ENCODE measurements at regions of chr5 and their contacts with region 1.

Region 1: GRCh38 chr5:96687812-96688453 is 25.8 kb downstream of the CAST start:
- DNase-seq: no peak
- H3K4me3 ChIP-seq: no peak overlapping the region
- CTCF ChIP-seq: peak; percentile 45

Region 2: GRCh38 chr5:96662725-96663513 is 25.0 kb before region 1 on chr5:
- CTCF ChIA-PET with region 1: interaction called, 14 read pairs
- POLR2A ChIA-PET with region 1: interaction called, 4 read pairs
- DNase-seq: peak; percentile 29
- H3K4me3 ChIP-seq: peak overlapping the region; percentile 83
- CTCF ChIP-seq: no peak

Region 3: DNA sequence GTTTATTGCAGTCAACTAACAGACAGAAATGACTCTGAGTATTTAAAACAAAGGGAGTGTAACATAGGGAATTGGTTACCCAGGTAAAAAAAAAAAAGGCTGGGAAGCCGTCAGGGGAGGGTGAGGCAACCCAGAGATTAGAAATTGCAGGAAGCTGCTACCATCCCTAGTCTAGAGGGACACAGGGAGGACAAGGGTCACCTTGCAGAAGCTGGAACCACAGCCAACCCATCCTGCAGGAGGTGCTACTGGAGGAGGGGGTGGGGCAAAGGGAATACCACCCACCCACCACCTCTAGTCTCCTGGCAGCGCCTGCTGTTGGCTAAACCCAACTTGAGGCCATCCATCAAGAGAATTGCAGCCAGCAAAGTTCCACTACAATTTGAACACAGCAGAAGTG is 19.2 kb before region 1 on chr5:
- CTCF ChIA-PET with region 1: interaction called, 17 read pairs
- POLR2A ChIA-PET with region 1: interaction called, 4 read pairs
- DNase-seq: no peak
- H3K4me3 ChIP-seq: no peak overlapping the region
- CTCF ChIP-seq: no peak

Region 4: GRCh38 chr5:96675882-96676281 is 12.1 kb before region 1 on chr5:
- CTCF ChIA-PET with region 1: interaction called, 17 read pairs
- POLR2A ChIA-PET with region 1: no interaction called
- DNase-seq: no peak
- H3K4me3 ChIP-seq: no peak overlapping the region
- CTCF ChIP-seq: no peak

Region 5: DNA sequence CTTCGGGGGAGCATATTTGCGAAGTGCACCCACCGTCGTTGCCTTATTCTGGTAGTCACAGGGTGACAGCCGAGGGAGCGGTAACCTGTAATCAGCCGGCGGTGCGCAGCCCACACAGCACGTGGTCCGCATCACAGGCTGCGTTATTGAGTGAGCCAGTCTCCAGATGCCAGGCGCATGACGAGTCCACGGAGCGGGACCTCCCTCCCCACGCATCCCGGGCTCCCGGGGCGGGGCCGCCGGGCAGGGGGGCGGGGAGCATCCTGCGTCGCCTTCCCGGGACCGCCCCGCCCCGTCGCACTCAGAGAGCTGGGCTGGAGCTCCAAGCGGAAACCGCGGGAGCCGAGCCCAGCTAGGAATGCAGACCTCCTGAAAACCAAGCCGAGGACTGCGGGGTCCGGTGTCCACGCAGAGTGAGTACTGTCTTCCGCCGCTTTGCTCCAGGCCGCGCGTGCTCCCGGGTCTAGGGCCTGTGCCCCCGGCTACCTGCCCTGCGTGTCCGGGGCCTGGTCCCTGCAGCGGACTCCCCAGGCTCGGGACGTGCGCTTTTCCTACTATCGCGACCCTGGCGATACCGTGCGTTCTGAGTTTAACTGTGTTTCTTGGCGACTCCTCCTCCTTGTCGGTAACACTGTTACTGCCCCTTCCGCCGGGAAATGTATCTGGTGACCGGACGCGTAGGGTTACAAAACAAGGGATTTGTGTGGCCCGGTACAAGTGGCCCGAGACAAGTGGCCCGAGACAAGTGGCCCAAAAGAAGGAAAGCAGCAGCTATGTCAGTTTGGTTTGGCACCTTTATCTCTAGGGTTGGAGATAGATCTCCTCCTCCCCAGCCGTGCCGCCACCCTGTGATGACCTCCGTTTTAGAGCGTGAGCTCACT is 14.8 kb after region 1 on chr5:
- CTCF ChIA-PET with region 1: interaction called, 25 read pairs
- POLR2A ChIA-PET with region 1: interaction called, 4 read pairs
- DNase-seq: no peak
- H3K4me3 ChIP-seq: peak overlapping the region; percentile 84
- CTCF ChIP-seq: no peak

Region 6: DNA sequence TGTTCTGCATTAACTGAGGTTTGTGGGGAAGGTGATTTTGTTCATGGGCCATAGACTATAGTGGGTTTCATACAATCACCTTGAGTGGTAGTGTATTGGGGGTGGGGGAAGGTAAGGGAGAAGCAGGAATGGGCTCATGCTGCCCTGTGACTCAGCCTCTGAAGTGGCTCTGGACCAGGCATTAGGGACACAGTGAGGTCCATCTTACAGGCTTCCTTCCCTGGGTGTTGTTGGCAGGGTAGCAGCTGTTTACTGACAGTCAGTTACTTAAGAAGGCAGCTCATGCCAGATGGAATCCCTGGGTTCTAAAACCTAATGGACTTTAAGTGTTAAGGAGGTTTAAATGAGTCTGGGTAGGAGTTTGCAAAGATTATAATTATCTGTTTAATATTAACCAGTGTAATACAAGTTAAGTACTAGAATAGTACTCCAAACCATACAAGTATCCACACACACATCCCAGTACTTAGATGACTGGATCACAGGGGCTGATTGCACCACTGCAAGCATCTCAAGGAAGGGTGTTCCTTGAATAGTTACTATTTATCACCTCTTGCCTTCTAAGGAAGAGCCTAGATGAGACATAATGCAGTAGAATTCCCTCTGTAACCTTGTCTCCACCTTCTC is 33.5 kb after region 1 on chr5:
- CTCF ChIA-PET with region 1: no interaction called
- POLR2A ChIA-PET with region 1: no interaction called
- DNase-seq: no peak
- H3K4me3 ChIP-seq: no peak overlapping the region
- CTCF ChIP-seq: no peak